MCF 10A (cell line): ENCODE measurements at regions of chr1 and their contacts with region 1.

Region 1: GRCh38 chr1:70134148-70134547 is 71.2 kb downstream of the LRRC40 start:
- DNase-seq: no peak
- H3K4me3 Mint-ChIP-seq: no peak overlapping the region
- H3K27ac Mint-ChIP-seq: no peak overlapping the region
- H3K4me1 Mint-ChIP-seq: no peaks in the 10 kb centered on the region
- H3K27me3 Mint-ChIP-seq: peaks cover 30% of the 10 kb centered on the region
- CTCF ChIP-seq: no peak

Region 2: DNA sequence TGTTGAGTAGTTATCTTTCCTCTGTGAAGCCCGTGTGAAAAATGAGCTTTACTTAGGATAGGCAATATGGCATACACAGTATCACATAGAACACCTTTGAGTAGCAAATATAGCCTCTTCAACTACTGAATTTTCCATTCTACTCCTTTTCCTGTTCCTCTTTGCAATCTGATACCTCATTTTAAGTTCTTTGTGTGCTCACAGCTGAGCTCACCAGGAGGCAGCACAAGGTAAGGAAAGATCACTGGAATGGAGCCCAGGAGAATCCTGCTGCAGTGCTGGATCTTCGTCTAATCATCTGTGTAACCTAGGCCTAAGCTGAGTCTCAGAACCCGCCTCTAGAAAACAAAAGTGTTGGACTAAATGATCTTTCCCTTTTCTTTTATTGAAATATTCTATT is 99.7 kb before region 1 on chr1:
- CTCF ChIA-PET with region 1: interaction called, 3 read pairs
- POLR2A ChIA-PET with region 1: no interaction called
- intact Hi-C with region 1: loop called (anchors 1 kb)
- DNase-seq: peak; percentile 52
- H3K4me3 Mint-ChIP-seq: no peak overlapping the region
- H3K27ac Mint-ChIP-seq: no peak overlapping the region
- H3K4me1 Mint-ChIP-seq: peaks cover 8% of the 10 kb centered on the region
- H3K27me3 Mint-ChIP-seq: peaks cover 67% of the 10 kb centered on the region
- CTCF ChIP-seq: peak; percentile 40

Region 3: GRCh38 chr1:70093250-70093975 is 40.7 kb before region 1 on chr1:
- CTCF ChIA-PET with region 1: no interaction called
- POLR2A ChIA-PET with region 1: no interaction called
- intact Hi-C with region 1: no loop called
- DNase-seq: no peak
- H3K4me3 Mint-ChIP-seq: no peak overlapping the region
- H3K27ac Mint-ChIP-seq: no peak overlapping the region
- H3K4me1 Mint-ChIP-seq: peaks cover 6% of the 10 kb centered on the region
- H3K27me3 Mint-ChIP-seq: peaks cover 35% of the 10 kb centered on the region
- CTCF ChIP-seq: no peak

Region 4: GRCh38 chr1:70150444-70150843 is 16.3 kb after region 1 on chr1:
- CTCF ChIA-PET with region 1: interaction called, 10 read pairs
- POLR2A ChIA-PET with region 1: no interaction called
- intact Hi-C with region 1: no loop called
- DNase-seq: no peak
- H3K4me3 Mint-ChIP-seq: no peak overlapping the region
- H3K27ac Mint-ChIP-seq: no peak overlapping the region
- H3K4me1 Mint-ChIP-seq: peaks cover 5% of the 10 kb centered on the region
- H3K27me3 Mint-ChIP-seq: no peaks in the 10 kb centered on the region
- CTCF ChIP-seq: no peak

Region 5: GRCh38 chr1:70221241-70222121 is 87.3 kb after region 1 on chr1 and contains the start of gene SRSF11:
- CTCF ChIA-PET with region 1: interaction called, 3 read pairs
- POLR2A ChIA-PET with region 1: interaction called, 6 read pairs
- intact Hi-C with region 1: loop called (anchors 1 kb)
- DNase-seq: peak; percentile 93
- H3K4me3 Mint-ChIP-seq: peak within 1 kb of the TSS; percentile 78
- H3K27ac Mint-ChIP-seq: peak within 1 kb of the TSS; percentile 96
- H3K4me1 Mint-ChIP-seq: peaks cover 21% of the 10 kb centered on the region
- H3K27me3 Mint-ChIP-seq: no peaks in the 10 kb centered on the region
- CTCF ChIP-seq: no peak
- total RNA-seq, gene SRSF11: 209 and 218 TPM in 2 replicates

Region 6: GRCh38 chr1:70487910-70488665 is 353.9 kb after region 1 on chr1:
- CTCF ChIA-PET with region 1: interaction called, 3 read pairs
- POLR2A ChIA-PET with region 1: no interaction called
- intact Hi-C with region 1: loop called (anchors 1 kb)
- DNase-seq: peak; percentile 63
- H3K4me3 Mint-ChIP-seq: no peak overlapping the region
- H3K27ac Mint-ChIP-seq: no peak overlapping the region
- H3K4me1 Mint-ChIP-seq: peaks cover 8% of the 10 kb centered on the region
- H3K27me3 Mint-ChIP-seq: peaks cover 17% of the 10 kb centered on the region
- CTCF ChIP-seq: peak; percentile 57

Region 7: DNA sequence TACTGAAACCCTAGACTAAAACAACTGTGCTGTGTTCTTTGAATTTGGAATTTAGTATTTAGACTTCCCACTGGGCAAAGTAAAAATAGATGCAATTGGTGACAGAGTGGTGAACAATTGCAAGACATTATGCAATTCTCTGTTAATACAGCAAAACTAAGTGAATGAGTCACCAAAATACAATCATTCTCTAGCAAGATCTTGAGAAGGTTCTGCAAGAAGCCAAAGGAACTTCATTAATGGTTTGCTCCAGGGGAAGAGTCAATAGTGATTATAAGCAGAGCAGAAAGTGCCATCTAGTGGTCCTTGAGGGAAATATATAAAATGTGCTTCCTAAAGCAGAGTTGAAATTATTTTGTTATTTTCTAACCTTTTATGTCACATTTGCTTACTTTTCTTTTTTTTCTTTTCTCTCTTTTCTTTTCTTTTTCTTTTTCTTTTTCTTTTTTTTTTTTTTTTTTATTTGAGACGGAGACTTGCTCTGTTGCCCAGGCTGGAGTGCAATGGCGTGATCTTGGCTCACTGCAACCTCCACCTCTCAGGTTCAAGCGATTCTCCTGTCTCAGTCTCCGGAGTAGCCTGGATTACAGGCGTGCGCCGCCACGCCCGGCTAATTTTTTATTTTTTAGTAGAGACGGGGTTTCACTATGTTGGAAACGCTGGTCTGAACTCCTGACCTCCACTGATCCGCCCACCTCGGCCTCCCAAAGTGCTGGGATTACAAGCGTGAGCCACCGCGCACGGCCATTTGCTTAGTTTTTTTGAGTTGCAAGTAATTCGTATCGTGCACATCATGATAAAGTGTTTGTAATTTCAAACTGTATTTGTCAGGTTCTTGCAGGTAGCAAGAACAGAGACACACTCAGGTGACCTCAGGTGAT is 376.1 kb after region 1 on chr1:
- CTCF ChIA-PET with region 1: interaction called, 4 read pairs
- POLR2A ChIA-PET with region 1: interaction called, 4 read pairs
- intact Hi-C with region 1: loop called (anchors 1 kb)
- DNase-seq: peak; percentile 88
- H3K4me3 Mint-ChIP-seq: no peak overlapping the region
- H3K27ac Mint-ChIP-seq: no peak overlapping the region
- H3K4me1 Mint-ChIP-seq: no peaks in the 10 kb centered on the region
- H3K27me3 Mint-ChIP-seq: peaks cover 17% of the 10 kb centered on the region
- CTCF ChIP-seq: peak; percentile 61